H1 (cell line): ENCODE measurements at regions of chr2 and their contacts with region 1.

Region 1: GRCh38 chr2:71348302-71348701 is 16.7 kb downstream of the ZNF638 start:
- DNase-seq: no peak
- H3K4me3 ChIP-seq: no peak overlapping the region
- H3K27ac ChIP-seq: no peak overlapping the region
- H3K4me1 ChIP-seq: no peaks in the 10 kb centered on the region
- H3K27me3 ChIP-seq: no peaks in the 10 kb centered on the region
- CTCF ChIP-seq: no peak
- EP300 ChIP-seq: no peak
- POLR2A ChIP-seq: no peak
- RAD21 ChIP-seq: no peak

Region 2: DNA sequence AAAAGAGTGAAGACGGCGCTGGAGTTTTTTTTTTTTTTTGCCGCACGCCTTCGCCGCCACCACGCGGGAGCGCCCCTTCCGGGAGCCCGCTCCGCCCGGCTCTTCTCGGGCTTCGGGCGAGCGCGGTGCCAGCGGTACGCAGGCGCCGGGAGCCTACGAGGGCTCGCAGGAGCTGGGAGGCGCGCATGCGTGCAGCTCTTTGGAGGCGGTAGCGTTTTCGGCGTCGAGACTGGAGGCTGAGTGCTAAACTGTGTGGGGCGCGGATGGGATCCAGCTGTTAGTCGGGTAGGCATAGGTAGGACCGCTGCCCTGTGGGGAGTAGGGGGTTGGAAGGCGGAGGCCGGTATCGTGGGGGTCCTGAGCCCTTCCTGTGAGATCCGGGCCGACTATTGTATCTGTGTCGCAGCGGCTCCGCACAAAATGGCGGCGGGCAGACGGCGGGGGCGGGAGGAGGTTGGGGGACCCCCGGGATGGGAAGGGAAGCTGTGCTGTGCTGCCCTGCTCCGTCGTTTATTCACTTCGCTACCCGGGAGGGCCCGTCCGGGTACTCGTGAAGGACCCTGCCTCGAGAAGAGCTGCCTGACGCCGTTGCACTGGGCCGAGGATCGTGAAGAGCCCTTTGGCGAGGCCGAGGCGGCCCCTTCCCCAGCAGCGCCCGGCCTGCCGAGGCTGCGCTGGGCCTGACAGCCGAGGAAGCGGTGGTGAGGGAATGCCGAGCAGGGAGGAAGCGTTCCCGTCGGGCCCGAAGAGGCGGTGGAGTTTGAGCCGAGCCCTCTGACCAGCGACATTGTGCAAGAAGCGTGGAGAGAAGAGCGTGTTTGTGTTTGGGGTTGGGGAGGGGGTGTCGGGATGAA is 16.5 kb before region 1 on chr2 and contains the start of gene ZNF638:
- CTCF ChIA-PET with region 1: interaction called, 11 read pairs
- POLR2A ChIA-PET with region 1: interaction called, 5 read pairs
- DNase-seq: peak; percentile 72 to 91
- H3K4me3 ChIP-seq: peak within 1 kb of the TSS; percentile 69 to 94 (median 90)
- H3K27ac ChIP-seq: peak within 1 kb of the TSS; percentile 98
- H3K4me1 ChIP-seq: peaks cover 4 to 6% (median 4%) of the 10 kb centered on the region in 4 experiments; a peak in 4 of 7 replicates
- H3K27me3 ChIP-seq: no peaks in the 10 kb centered on the region
- CTCF ChIP-seq: peak; percentile 30 to 71 (median 62)
- EP300 ChIP-seq: no peak; a peak in 1 of 3 replicates
- POLR2A ChIP-seq: peak; percentile 77 to 95; a peak in 2 of 3 replicates
- RAD21 ChIP-seq: peak; percentile 20 to 45; a peak in 2 of 4 replicates
- total RNA-seq, gene ZNF638: 143 and 144 TPM in 2 replicates

Region 3: GRCh38 chr2:71477231-71477691 is 129.0 kb after region 1 on chr2:
- CTCF ChIA-PET with region 1: no interaction called
- POLR2A ChIA-PET with region 1: no interaction called
- DNase-seq: no peak
- H3K4me3 ChIP-seq: no peak overlapping the region
- H3K27ac ChIP-seq: no peak overlapping the region
- H3K4me1 ChIP-seq: peaks cover 2 to 5% (median 4%) of the 10 kb centered on the region in 4 experiments; a peak in 5 of 7 replicates
- H3K27me3 ChIP-seq: no peaks in the 10 kb centered on the region; a peak in 1 of 7 replicates
- CTCF ChIP-seq: no peak
- EP300 ChIP-seq: no peak
- POLR2A ChIP-seq: no peak
- RAD21 ChIP-seq: no peak